ENCODE measurements at regions of chr1 and their contacts with region 1.

Region 1: GRCh38 chr1:184805667-184806295 is 51.1 kb upstream of the EDEM3 start:
- DNase-seq: peak; percentile 90

Region 2: GRCh38 chr1:184407816-184408537 is 397.8 kb before region 1 on chr1:
- in situ Hi-C with region 1: no loop called
- DNase-seq: no peak

Region 3: GRCh38 chr1:184595591-184595990 is 210.2 kb before region 1 on chr1:
- in situ Hi-C with region 1: no loop called
- DNase-seq: no peak

Region 4: DNA sequence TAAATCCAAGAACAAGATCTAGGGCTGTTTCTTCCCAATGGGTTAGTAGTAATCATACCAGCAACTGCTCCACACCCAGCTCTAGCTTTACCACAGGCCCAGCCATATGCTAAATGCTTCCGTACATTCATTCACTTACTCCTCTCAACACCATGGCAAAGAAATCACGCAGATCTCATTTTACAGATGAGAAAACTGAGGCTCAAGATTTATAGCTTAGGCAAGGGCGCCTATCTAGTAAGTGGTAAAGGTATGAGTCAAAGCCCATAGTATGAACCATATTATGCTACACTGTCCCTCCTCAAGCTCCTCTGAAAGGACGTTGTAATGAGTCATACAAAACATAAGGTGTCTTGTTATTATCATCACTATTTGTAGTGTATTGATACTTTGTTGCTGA is 86.3 kb after region 1 on chr1:
- in situ Hi-C with region 1: no loop called
- DNase-seq: no peak

Region 5: DNA sequence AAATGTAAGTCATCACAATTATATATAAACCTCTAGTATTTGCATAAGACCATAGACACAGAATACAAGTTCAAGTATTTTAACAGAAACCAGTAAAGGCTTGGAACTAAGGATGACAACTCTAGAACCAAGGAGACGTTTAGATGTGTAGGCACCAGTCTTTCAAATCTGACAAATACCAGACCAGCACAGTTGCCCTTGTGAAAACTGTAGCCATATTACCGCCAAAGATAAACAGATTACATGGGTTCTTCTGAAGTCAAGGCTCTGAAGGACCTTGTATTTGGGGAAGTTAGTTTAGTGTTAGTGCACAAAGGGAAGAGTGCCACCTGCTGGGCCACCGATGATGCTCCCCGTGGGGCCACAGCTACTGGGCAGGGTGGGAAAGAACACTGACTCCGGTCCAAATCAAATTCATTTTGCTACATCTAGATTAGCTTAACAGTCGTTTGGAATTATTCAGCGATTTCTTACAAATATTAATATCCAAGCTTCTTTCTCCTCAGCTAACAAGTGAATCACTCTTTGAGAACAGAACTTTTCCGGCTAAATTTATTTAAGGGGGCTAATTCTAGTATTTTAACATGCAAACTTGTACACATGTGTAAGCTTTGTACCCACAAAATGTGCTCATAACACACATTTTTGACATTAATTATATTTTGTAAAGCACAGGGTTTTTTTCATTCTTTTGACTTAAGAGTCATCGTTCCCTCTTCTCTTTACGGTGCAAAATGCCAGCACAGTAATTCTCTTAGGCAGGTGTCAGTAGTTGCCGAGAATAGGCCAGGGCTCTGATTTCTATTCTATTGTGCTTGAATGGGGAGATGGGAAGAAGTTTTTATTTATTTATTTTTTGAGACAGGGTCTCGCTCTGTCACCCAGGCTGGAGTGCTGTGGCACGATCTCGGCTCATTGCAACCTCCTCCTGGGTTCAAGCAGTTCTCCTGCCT is 176.5 kb after region 1 on chr1:
- in situ Hi-C with region 1: loop called (anchors 25 kb)
- DNase-seq: peak; percentile 42